ENCODE measurements at regions of chr6 and their contacts with region 1.

Region 1: DNA sequence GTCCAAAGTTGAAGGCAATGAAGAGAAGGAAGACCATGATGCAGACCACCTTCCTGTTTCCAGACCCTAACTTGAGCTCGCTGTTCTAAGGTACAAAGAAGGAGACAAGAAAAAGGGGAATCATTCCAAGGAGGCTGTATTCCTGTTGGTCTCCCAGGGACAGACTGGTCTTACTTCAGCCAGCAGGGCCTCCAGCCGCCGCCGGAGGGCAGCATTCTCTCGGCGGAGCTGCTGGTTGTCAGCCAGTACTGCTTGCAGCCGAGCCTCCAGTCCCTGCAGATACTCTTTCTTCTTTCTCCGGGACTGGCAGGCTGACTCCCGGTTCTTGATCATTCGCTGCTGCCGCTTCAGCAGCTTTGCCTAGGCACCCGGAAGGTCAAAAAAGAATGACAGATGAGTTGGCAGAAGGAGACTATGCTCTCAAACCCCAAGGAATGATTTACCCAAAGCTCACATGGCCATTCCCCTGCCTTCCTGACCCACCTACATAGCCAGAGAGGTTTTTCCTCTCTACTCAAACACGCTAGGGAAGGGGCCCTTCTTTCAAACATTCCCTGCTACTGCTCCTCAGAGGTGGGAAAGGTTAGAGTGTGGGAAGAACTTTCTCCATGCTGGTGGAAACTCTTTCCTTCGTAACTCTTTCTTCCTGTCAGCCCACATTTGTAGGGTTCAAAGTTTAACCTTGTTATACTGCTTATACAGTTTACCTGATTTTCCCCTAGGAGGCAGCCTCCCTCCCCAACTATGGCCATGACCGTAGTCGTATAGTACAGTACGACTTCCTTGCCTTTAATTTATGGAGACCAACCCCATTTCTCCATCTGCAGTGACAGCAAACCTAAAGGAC is 9.0 kb downstream of the ATF6B start:
- DNase-seq: peak; percentile 85 to 94 (median 92)
- H3K4me3 ChIP-seq: no peak overlapping the region
- H3K27ac ChIP-seq: peak overlapping the region; percentile 32 to 58
- H3K4me1 ChIP-seq: peaks cover 1% of the 10 kb centered on the region
- H3K27me3 ChIP-seq: no peaks in the 10 kb centered on the region
- CTCF ChIP-seq: peak; percentile 92 to 93 (median 92)
- EP300 ChIP-seq: no peak
- POLR2A ChIP-seq: peak; percentile 18

Region 2: GRCh38 chr6:31901953-31902643 is 216.9 kb before region 1 on chr6 and contains the start of gene ZBTB12:
- intact Hi-C with region 1: loop called in 1 of 4 experiments (anchors 10 kb)
- DNase-seq: peak; percentile 96 to 97 (median 96)
- H3K4me3 ChIP-seq: peak within 1 kb of the TSS; percentile 61
- H3K27ac ChIP-seq: peak within 1 kb of the TSS; percentile 43 to 66
- H3K4me1 ChIP-seq: peaks cover 8% of the 10 kb centered on the region
- H3K27me3 ChIP-seq: no peaks in the 10 kb centered on the region
- CTCF ChIP-seq: peak in 2 of 3 donors; percentile 5 to 13
- EP300 ChIP-seq: no peak
- POLR2A ChIP-seq: peak; percentile 64
- total RNA-seq, gene ZBTB12: 1.9 to 24.8 (median 10.8) TPM

Region 3: DNA sequence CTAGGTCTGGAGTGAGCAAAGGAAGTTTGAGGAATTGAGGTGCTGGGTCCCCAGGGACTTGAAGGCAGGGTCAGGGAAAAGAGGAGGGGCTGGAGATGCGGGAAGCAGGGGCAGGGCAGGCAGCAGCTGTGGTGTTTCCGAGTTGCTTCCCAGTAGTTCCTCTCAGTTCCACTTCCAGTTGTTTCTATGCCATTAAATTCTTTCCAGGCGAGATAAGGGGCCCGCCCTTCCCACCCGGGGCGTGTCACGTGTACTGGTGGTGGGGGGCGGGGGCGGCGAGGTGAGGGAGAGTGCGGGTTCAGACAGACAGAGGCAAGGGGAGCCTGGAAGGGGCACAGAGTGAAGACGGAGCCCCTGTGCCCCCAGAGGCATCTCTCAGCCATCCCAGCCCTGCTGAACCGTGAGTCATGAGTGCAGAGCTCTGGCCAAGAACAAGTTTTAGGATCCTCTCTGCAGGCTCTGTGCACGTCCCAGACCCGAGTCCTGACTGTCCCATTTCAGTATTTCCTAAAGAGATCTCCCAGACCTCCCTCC is 10.8 kb before region 1 on chr6:
- intact Hi-C with region 1: no loop called
- DNase-seq: peak; percentile 78 to 88 (median 86)
- H3K4me3 ChIP-seq: peak overlapping the region; percentile 43
- H3K27ac ChIP-seq: peak overlapping the region; percentile 78 to 81
- H3K4me1 ChIP-seq: peaks cover 38% of the 10 kb centered on the region
- H3K27me3 ChIP-seq: no peaks in the 10 kb centered on the region
- CTCF ChIP-seq: no peak
- EP300 ChIP-seq: peak; percentile 84
- POLR2A ChIP-seq: peak; percentile 47

Region 4: GRCh38 chr6:32153564-32154513 is 34.8 kb after region 1 on chr6 and contains the start of gene PPT2:
- intact Hi-C with region 1: loop called in 3 of 4 experiments (anchors 2 kb)
- DNase-seq: peak; percentile 94 to 97 (median 95)
- H3K4me3 ChIP-seq: peak within 1 kb of the TSS; percentile 51
- H3K27ac ChIP-seq: peak within 1 kb of the TSS; percentile 90 to 94
- H3K4me1 ChIP-seq: peaks cover 9% of the 10 kb centered on the region
- H3K27me3 ChIP-seq: no peaks in the 10 kb centered on the region
- CTCF ChIP-seq: peak in 2 of 3 donors; percentile 39 to 46
- EP300 ChIP-seq: peak; percentile 16
- POLR2A ChIP-seq: peak; percentile 71
- total RNA-seq, gene PPT2: 33.5 to 63.9 (median 43.9) TPM

Region 5: DNA sequence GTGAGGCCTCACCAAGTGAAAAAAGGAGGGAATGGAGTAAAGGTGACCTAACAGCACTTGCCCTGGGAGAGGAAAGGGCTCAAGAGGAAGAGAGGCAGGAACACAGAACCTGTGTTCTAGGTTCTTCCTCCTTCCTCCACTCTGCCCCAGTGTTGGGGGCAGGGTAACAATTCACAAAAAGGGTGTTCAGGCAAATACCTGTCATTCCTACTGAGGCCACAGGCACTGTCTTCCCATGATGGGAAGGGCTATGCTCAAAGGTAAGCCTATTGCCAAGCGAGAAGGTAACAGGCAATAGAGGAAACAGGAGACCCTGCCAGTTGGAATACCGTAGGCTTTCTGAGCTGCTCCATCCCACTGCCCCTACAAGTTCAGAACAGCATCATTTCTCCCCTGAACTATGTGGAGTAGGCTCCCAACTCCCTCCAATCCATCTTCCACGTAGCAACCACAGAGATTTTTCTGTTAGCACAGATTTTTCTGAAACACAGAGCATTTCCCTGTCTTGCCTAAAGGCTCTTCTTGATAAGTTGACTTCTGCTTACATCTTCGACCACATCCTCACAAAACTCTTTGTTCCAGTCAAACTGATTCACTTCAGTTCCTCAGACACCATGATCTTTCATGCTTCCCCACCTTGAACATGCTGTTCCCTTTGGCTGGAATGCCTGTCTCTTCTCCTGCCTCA is 54.2 kb after region 1 on chr6:
- intact Hi-C with region 1: loop called in 1 of 4 experiments (anchors 5 kb)
- DNase-seq: no peak
- H3K4me3 ChIP-seq: no peak overlapping the region
- H3K27ac ChIP-seq: no peak overlapping the region
- H3K4me1 ChIP-seq: peaks cover 3% of the 10 kb centered on the region
- H3K27me3 ChIP-seq: no peaks in the 10 kb centered on the region
- CTCF ChIP-seq: no peak
- EP300 ChIP-seq: no peak
- POLR2A ChIP-seq: no peak